CD4-positive, alpha-beta memory T cell (primary cell): ENCODE measurements at regions of chr7 and their contacts with region 1.

Region 1: GRCh38 chr7:100132697-100133151 is 6.0 kb downstream of the MBLAC1 start:
- DNase-seq: peak; percentile 60 to 71 (median 65)
- H3K4me3 ChIP-seq: no peak overlapping the region
- H3K4me3 Mint-ChIP-seq: peak overlapping the region in 2 of 8 donors; percentile 39 to 52
- H3K27ac ChIP-seq: no peak overlapping the region
- H3K27ac Mint-ChIP-seq: peak overlapping the region in 5 of 7 donors; percentile 36 to 77 (median 48)
- H3K4me1 ChIP-seq: peaks cover 24% of the 10 kb centered on the region
- H3K4me1 Mint-ChIP-seq: peaks cover 5 to 20% (median 13%) of the 10 kb centered on the region in 4 donors
- H3K27me3 ChIP-seq: no peaks in the 10 kb centered on the region
- H3K27me3 Mint-ChIP-seq: peaks cover 0 to 1% of the 10 kb centered on the region in 2 donors

Region 2: GRCh38 chr7:99910976-99911375 is 221.7 kb before region 1 on chr7:
- CTCF ChIA-PET with region 1: interaction called, 7 read pairs
- POLR2A ChIA-PET with region 1: no interaction called
- intact Hi-C with region 1: loop called (anchors 1 kb)
- DNase-seq: no peak
- H3K4me3 ChIP-seq: no peak overlapping the region
- H3K4me3 Mint-ChIP-seq: peak overlapping the region in 1 of 8 donors; percentile 54
- H3K27ac ChIP-seq: no peak overlapping the region
- H3K27ac Mint-ChIP-seq: peak overlapping the region in 2 of 7 donors; percentile 42 to 68
- H3K4me1 ChIP-seq: peaks cover 25% of the 10 kb centered on the region
- H3K4me1 Mint-ChIP-seq: peaks cover 33 to 65% (median 51%) of the 10 kb centered on the region in 4 donors
- H3K27me3 ChIP-seq: no peaks in the 10 kb centered on the region
- H3K27me3 Mint-ChIP-seq: no peaks in the 10 kb centered on the region

Region 3: GRCh38 chr7:100101016-100101862 is 31.5 kb before region 1 on chr7 and contains the starts of genes AP4M1 and MCM7:
- CTCF ChIA-PET with region 1: interaction called, 28 read pairs
- POLR2A ChIA-PET with region 1: interaction called, 45 read pairs
- intact Hi-C with region 1: no loop called
- DNase-seq: peak; percentile 94 to 97 (median 94)
- H3K4me3 ChIP-seq: peak within 1 kb of the TSS; percentile 95
- H3K4me3 Mint-ChIP-seq: peak within 1 kb of the TSS; percentile 92 to 95 (median 93)
- H3K27ac ChIP-seq: peak within 1 kb of the TSS; percentile 96
- H3K27ac Mint-ChIP-seq: peak within 1 kb of the TSS; percentile 93 to 99 (median 97)
- H3K4me1 ChIP-seq: peaks cover 29% of the 10 kb centered on the region
- H3K4me1 Mint-ChIP-seq: peaks cover 22 to 46% (median 34%) of the 10 kb centered on the region in 4 donors
- H3K27me3 ChIP-seq: no peaks in the 10 kb centered on the region
- H3K27me3 Mint-ChIP-seq: peaks cover 0 to 2% of the 10 kb centered on the region in 2 donors
- total RNA-seq, gene AP4M1: 12.1 to 14.9 TPM
- total RNA-seq, gene MCM7: 164 to 173 TPM

Region 4: DNA sequence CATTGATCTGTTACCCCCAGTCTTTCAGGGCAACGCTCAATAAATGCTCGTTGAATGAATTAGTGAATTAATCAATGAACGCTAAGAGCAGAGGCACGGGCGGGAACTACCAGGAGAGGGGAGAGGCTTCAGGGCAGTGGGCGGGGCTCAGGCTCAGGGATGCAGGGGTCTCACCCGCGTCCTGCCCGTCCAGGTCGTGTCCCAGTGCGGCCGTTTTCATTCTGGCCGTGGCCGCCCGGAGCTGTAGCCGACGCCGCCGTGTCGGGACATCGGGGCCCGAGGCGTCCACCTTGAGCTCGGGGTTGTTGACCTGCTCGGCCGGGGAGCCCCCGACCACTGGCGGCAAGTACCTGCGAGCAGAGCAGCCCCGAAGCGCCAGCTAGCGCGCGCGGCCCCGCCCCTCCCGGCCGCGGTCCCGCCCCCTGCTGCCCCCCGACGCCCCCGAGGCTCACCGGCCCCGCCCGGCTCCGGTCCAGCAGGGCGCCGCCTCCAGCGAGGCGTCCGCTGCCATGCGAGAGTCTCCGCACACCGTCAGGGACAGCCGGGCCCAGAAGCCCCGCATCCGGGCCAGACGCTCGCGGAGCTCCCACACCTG is 38.5 kb after region 1 on chr7:
- CTCF ChIA-PET with region 1: interaction called, 13 read pairs
- POLR2A ChIA-PET with region 1: interaction called, 4 read pairs
- intact Hi-C with region 1: no loop called
- DNase-seq: peak in 2 of 5 donors; percentile 32 to 52
- H3K4me3 ChIP-seq: no peak overlapping the region
- H3K4me3 Mint-ChIP-seq: peak overlapping the region; percentile 69 to 87 (median 78)
- H3K27ac ChIP-seq: no peak overlapping the region
- H3K27ac Mint-ChIP-seq: peak overlapping the region in 4 of 7 donors; percentile 7 to 85 (median 64)
- H3K4me1 ChIP-seq: peaks cover 55% of the 10 kb centered on the region
- H3K4me1 Mint-ChIP-seq: peaks cover 39 to 67% (median 50%) of the 10 kb centered on the region in 4 donors
- H3K27me3 ChIP-seq: no peaks in the 10 kb centered on the region
- H3K27me3 Mint-ChIP-seq: peaks cover 2 to 4% of the 10 kb centered on the region in 2 donors

Region 5: DNA sequence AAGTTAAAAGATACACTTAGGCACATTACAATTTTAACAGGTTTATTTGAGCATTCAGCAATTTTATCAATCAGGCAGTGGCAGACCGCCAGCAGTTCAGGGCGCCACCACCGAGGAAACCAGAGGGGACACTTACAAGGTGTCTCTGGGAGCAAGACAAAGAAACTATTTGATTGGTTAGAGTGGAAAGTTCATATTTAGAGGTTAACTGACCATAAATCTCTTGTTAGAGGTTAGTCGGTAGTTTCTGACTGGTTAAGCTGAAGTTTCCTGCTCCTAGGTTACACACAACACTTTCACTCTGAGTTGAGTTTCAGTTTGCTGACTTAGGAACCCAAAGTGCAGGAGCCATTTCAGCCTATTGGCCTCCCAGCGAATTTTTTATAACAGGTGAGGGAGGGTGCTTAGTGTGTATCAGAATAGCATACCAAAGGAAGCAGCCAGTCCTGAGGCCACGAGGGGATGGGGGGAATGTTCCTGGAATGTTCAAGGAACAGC is 76.2 kb after region 1 on chr7:
- CTCF ChIA-PET with region 1: interaction called, 16 read pairs
- POLR2A ChIA-PET with region 1: interaction called, 5 read pairs
- intact Hi-C with region 1: no loop called
- DNase-seq: peak in 3 of 5 donors; percentile 16 to 37 (median 20)
- H3K4me3 ChIP-seq: no peak overlapping the region
- H3K4me3 Mint-ChIP-seq: peak overlapping the region; percentile 58 to 80 (median 75)
- H3K27ac ChIP-seq: no peak overlapping the region
- H3K27ac Mint-ChIP-seq: peak overlapping the region; percentile 66 to 91 (median 84)
- H3K4me1 ChIP-seq: peaks cover 37% of the 10 kb centered on the region
- H3K4me1 Mint-ChIP-seq: peaks cover 32 to 43% (median 36%) of the 10 kb centered on the region in 4 donors
- H3K27me3 ChIP-seq: no peaks in the 10 kb centered on the region
- H3K27me3 Mint-ChIP-seq: no peaks in the 10 kb centered on the region

Region 6: DNA sequence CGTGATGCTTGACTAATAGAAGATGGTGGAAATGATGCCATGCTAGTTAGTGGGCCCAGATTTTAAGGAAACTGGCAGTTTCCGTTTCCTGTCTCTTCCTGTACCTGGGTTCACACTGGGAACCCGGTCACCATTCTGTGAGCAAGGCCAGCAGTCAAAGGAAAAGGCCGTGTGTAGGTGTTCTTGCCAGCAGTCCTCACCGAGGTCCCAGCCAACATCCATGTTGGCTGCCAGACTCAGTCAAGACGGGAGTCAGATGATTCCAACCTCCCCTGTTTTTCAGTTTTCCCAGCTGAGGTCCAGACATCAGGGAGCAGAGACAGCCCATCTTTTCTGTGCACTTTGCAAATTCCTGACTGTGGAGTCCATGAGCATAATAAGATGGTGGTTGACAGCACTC is 210.0 kb after region 1 on chr7:
- CTCF ChIA-PET with region 1: interaction called, 7 read pairs
- POLR2A ChIA-PET with region 1: interaction called, 3 read pairs
- intact Hi-C with region 1: loop called (anchors 2 kb)
- DNase-seq: no peak
- H3K4me3 ChIP-seq: no peak overlapping the region
- H3K4me3 Mint-ChIP-seq: peak overlapping the region in 1 of 8 donors; percentile 43
- H3K27ac ChIP-seq: no peak overlapping the region
- H3K27ac Mint-ChIP-seq: peak overlapping the region; percentile 83 to 92 (median 87)
- H3K4me1 ChIP-seq: peaks cover 21% of the 10 kb centered on the region
- H3K4me1 Mint-ChIP-seq: peaks cover 14 to 34% (median 19%) of the 10 kb centered on the region in 4 donors
- H3K27me3 ChIP-seq: no peaks in the 10 kb centered on the region
- H3K27me3 Mint-ChIP-seq: no peaks in the 10 kb centered on the region